ENCODE measurements at regions of chr22 and their contacts with region 1.

Region 1: DNA sequence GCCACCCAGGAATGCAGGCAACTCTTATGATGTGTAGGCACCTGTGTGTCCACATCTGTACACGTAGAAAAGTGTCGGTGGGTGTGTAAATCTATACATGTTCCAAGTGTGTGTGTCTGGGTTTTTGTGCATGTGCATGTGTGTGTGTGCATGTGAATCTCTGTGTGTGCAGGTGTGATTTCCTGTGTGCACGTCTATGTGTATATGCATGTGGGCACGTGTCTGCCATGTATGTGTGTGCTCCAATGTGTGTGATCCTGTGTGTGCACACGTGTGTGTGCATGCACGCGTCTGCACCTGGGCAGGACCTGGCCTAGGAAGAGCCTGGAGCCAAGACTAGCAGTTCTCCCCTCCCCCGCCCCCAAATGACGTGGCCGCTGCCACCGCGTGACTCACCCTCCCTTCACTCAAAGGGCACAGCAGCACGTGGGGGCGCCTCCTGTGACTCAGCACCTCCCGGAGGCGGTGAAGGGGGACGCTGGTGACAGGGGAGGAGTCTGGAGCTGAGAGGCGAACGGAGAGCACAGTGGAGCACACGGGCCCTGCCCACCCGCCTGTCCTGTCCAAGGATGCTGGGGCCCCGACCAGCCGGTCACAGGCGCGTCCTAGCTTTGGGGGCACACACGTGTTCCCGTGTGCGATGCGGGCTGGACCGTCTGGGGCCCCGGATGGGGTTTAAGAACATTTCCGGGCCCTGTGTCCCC is 10.1 kb downstream of the PIM3 start:
- DNase-seq: peak; percentile 98 to 99
- ATAC-seq: peak; percentile 93
- H3K4me3 ChIP-seq: peak overlapping the region; percentile 9 to 14
- H3K27ac ChIP-seq: peak overlapping the region in 1 of 2 donors; percentile 25
- H3K4me1 ChIP-seq: no peaks in the 10 kb centered on the region
- H3K27me3 ChIP-seq: no peaks in the 10 kb centered on the region

Region 2: GRCh38 chr22:50016988-50017700 is 46.5 kb after region 1 on chr22:
- intact Hi-C with region 1: loop called in 1 of 2 experiments (anchors 5 kb)
- DNase-seq: peak in 1 of 2 donors; percentile 69
- ATAC-seq: no peak
- H3K4me3 ChIP-seq: no peak overlapping the region
- H3K27ac ChIP-seq: no peak overlapping the region
- H3K4me1 ChIP-seq: no peaks in the 10 kb centered on the region
- H3K27me3 ChIP-seq: no peaks in the 10 kb centered on the region